T-cell (primary cell): ENCODE measurements at regions of chr1 and their contacts with region 1.

Region 1: GRCh38 chr1:154791292-154792166 is 78.6 kb downstream of the KCNN3 start:
- DNase-seq: peak; percentile 63 to 93 (median 84)
- ATAC-seq: peak; percentile 98 to 99 (median 98)
- H3K4me3 ChIP-seq: no peak overlapping the region
- H3K4me3 Mint-ChIP-seq: peak overlapping the region; percentile 58 to 70 (median 63)
- H3K27ac ChIP-seq: peak overlapping the region; percentile 61
- H3K27ac Mint-ChIP-seq: peak overlapping the region; percentile 92 to 95
- H3K4me1 ChIP-seq: peaks cover 24 to 31% of the 10 kb centered on the region in 2 experiments
- H3K4me1 Mint-ChIP-seq: peaks cover 34 to 44% (median 40%) of the 10 kb centered on the region in 3 donors
- H3K27me3 ChIP-seq: peaks cover 0 to 8% of the 10 kb centered on the region in 2 experiments
- H3K27me3 Mint-ChIP-seq: peaks cover 0 to 4% of the 10 kb centered on the region in 2 donors

Region 2: DNA sequence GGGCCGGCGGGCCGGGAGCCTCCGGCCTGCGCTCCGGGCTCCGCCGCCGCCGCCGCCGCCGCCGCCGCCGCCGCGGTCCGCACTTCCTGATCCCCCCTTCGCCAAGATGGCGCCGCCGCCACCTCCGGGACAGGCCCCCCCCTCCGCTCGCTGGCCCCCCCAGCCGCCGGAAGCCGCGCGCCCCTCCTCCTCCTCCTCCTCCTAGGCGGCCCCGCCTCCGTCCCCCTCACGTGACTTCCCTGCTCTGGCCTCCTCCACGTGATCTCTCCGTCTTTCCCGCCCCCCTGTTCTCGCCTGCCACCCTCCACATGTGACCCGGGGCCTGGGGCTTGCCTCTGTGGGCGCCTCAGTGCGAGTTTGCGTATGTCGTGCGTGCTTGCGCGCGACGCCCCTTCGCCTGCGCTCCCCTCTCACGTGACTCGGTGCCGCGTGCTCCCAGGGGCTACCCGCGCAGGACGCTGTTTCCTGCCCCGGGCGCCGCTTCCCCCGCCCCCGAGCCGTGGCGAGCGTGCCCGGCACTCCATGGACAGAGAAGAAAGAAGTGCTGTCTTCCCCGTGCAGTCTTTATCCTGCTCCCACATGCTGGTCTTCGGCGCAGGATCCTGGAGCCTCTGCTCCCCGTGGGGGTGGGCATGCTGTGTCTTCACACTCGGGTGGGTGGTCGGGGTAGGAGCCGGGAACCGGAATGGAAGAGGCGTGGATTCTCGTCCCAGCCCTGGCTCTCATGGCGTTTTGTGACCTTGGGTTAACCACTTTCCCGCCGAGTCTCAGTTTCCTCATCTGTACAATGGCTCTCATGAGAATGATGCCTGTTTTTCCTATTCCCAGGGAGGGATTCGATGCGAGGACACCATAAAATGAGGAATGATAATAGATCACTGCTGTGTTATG is 232.7 kb before region 1 on chr1 and contains the start of gene UBE2Q1:
- CTCF ChIA-PET with region 1: interaction called, 5 to 10 read pairs
- POLR2A ChIA-PET with region 1: no interaction called
- DNase-seq: peak; percentile 98 to 100 (median 99)
- ATAC-seq: peak; percentile 91 to 93 (median 92)
- H3K4me3 ChIP-seq: peak within 1 kb of the TSS; percentile 77 to 89
- H3K4me3 Mint-ChIP-seq: peak within 1 kb of the TSS; percentile 89 to 92 (median 90)
- H3K27ac ChIP-seq: peak within 1 kb of the TSS; percentile 85
- H3K27ac Mint-ChIP-seq: peak within 1 kb of the TSS; percentile 91 to 92
- H3K4me1 ChIP-seq: peaks cover 19 to 33% of the 10 kb centered on the region in 2 experiments
- H3K4me1 Mint-ChIP-seq: peaks cover 34 to 41% (median 36%) of the 10 kb centered on the region in 3 donors
- H3K27me3 ChIP-seq: no peaks in the 10 kb centered on the region
- H3K27me3 Mint-ChIP-seq: no peaks in the 10 kb centered on the region
- total RNA-seq, gene UBE2Q1: 64.0 to 111 (median 90.0) TPM

Region 3: GRCh38 chr1:154747740-154748404 is 43.7 kb before region 1 on chr1:
- CTCF ChIA-PET with region 1: interaction called in 1 of 2 experiments, 13 read pairs
- POLR2A ChIA-PET with region 1: no interaction called
- DNase-seq: peak in 34 of 35 experiments; percentile 14 to 68 (median 38)
- ATAC-seq: peak; percentile 86 to 95 (median 91)
- H3K4me3 ChIP-seq: peak overlapping the region; percentile 18 to 39
- H3K4me3 Mint-ChIP-seq: peak overlapping the region; percentile 67 to 82 (median 69)
- H3K27ac ChIP-seq: peak overlapping the region; percentile 78
- H3K27ac Mint-ChIP-seq: peak overlapping the region; percentile 92 to 98
- H3K4me1 ChIP-seq: peaks cover 19 to 60% of the 10 kb centered on the region in 2 experiments
- H3K4me1 Mint-ChIP-seq: peaks cover 50 to 57% (median 50%) of the 10 kb centered on the region in 3 donors
- H3K27me3 ChIP-seq: peaks cover 0 to 8% of the 10 kb centered on the region in 2 experiments
- H3K27me3 Mint-ChIP-seq: no peaks in the 10 kb centered on the region

Region 4: DNA sequence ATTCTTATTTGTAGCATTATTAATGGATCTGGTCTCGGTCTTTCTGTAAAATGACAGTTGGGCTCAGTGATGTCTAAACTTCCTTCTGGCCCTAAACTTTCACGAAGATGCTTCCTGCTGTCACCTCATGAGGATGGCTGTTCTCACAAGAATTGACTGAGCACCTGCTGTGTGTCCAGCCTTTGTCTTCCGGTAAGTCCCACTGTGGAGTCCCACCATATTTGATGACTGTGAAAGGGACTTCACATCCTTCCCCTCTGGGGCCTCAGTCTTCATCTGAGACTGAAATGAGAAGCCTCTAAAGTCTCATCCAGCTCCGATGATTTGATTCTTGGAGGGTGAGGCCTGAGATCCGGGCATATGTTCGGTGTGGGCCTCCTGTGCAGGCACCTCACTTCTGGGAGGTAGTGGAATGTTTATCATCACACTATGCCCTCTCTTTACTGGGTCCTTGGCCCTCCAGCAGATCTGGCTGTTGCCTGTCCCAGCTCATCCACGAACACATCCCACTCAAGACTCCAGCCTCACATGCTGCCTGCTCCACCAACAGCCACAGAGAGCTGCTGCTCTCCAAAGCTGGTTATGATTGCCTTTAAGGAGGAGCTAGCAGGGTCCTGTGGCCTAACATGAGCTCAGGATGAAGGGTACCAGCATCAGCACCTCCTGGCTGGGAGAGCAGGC is 17.2 kb before region 1 on chr1:
- CTCF ChIA-PET with region 1: interaction called, 3 to 5 read pairs
- POLR2A ChIA-PET with region 1: interaction called in 1 of 2 experiments, 12 read pairs
- DNase-seq: no peak
- ATAC-seq: no peak
- H3K4me3 ChIP-seq: no peak overlapping the region
- H3K4me3 Mint-ChIP-seq: no peak overlapping the region
- H3K27ac ChIP-seq: no peak overlapping the region
- H3K27ac Mint-ChIP-seq: no peak overlapping the region
- H3K4me1 ChIP-seq: no peaks in the 10 kb centered on the region
- H3K4me1 Mint-ChIP-seq: peaks cover 0 to 6% (median 0%) of the 10 kb centered on the region in 3 donors
- H3K27me3 ChIP-seq: peaks cover 0 to 15% of the 10 kb centered on the region in 2 experiments
- H3K27me3 Mint-ChIP-seq: no peaks in the 10 kb centered on the region

Region 5: DNA sequence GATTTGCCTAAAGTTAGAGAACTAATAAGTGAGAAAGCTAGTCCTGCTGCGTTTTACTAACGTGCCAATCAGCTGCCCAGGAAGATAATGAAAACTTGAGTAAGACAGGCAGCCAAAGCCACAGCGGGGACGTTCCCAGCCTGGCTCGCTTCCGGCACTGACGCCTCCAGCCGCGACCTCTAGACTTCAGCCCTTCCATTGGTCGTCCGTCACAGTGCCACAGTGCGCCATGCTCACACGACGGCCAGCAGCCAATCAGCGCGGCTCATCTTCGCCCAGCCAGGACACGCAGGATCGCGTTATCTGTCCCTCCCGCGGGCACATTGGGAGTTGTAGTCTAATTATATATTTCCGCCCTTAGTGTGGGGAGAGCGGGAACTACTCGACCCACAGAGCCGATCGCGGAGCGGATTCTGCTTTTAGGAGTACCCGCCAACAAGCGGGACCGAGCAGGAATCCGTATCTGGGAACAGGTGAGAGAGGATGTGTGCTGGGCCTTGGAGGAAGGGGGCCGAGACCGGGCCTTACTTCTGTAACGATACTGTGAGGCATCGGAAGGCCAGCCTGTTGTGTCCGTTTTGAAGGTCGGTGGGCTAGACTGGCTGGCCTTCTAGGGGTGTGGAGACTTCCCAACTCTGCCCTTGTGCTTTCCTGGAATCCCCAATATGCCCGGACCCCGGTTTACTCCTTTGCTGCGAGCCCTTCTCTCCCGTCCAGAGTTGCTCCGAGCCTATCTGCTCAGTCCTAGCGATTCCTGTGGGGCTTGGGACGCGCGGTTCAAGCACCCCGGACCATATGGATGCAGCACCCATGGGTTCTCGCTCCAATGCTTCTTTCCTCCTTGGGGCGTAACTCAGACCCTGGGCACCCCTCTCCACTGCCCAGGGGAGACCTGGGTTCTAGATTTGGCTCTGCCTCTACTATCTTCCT is 517.2 kb after region 1 on chr1 and contains the start of gene FDPS:
- CTCF ChIA-PET with region 1: no interaction called
- POLR2A ChIA-PET with region 1: interaction called in 1 of 2 experiments, 10 read pairs
- DNase-seq: peak; percentile 87 to 99 (median 97)
- ATAC-seq: peak; percentile 98 to 100 (median 99)
- H3K4me3 ChIP-seq: peak within 1 kb of the TSS; percentile 89
- H3K4me3 Mint-ChIP-seq: peak within 1 kb of the TSS; percentile 90 to 95 (median 92)
- H3K27ac ChIP-seq: peak within 1 kb of the TSS; percentile 98
- H3K27ac Mint-ChIP-seq: peak within 1 kb of the TSS; percentile 92 to 93
- H3K4me1 ChIP-seq: peaks cover 5 to 30% of the 10 kb centered on the region in 2 experiments
- H3K4me1 Mint-ChIP-seq: peaks cover 30 to 32% (median 31%) of the 10 kb centered on the region in 3 donors
- H3K27me3 ChIP-seq: no peaks in the 10 kb centered on the region
- H3K27me3 Mint-ChIP-seq: no peaks in the 10 kb centered on the region
- total RNA-seq, gene FDPS: 66.7 to 100 (median 93.0) TPM